Mammary epithelial cell (primary cell): ENCODE measurements at regions of chr3 and their contacts with region 1.

Region 1: GRCh38 chr3:19124746-19125145 is 23.6 kb upstream of the KCNH8 start:
- DNase-seq: no peak
- H3K4me3 ChIP-seq: no peak overlapping the region
- H3K27ac ChIP-seq: no peak overlapping the region
- H3K4me1 ChIP-seq: no peaks in the 10 kb centered on the region
- H3K27me3 ChIP-seq: no peaks in the 10 kb centered on the region
- CTCF ChIP-seq: no peak

Region 2: DNA sequence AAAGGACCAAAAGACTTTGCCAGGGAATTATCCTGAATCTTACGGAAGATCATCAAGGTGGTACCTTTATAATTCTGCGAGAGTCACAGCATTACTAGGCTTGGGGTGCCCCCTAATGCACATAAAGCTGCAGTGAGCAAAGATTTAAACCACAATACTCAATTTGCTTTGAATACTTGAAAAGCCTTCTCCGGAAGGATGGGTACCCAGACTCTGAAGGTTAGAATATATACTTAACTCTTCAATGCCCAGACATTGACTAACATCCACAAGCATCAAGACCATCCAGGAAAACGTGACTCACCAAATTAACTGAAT is 94.3 kb before region 1 on chr3:
- CTCF ChIA-PET with region 1: no interaction called
- dilution Hi-C with region 1: no loop called
- in situ Hi-C with region 1: no loop called
- intact Hi-C with region 1: loop called (anchors 5 kb)
- DNase-seq: no peak
- H3K4me3 ChIP-seq: no peak overlapping the region
- H3K27ac ChIP-seq: no peak overlapping the region
- H3K4me1 ChIP-seq: no peaks in the 10 kb centered on the region
- H3K27me3 ChIP-seq: no peaks in the 10 kb centered on the region
- CTCF ChIP-seq: no peak